K562 (cell line): ENCODE measurements at regions of chr7 and their contacts with region 1.

Region 1: GRCh38 chr7:47435889-47436312 is 146.0 kb downstream of the TNS3 start:
- DNase-seq: peak; percentile 31 to 66 (median 41)
- ATAC-seq: peak; percentile 97
- H3K4me3 ChIP-seq: no peak overlapping the region
- H3K27ac ChIP-seq: no peak overlapping the region
- H3K4me1 ChIP-seq: no peaks in the 10 kb centered on the region
- H3K27me3 ChIP-seq: peaks cover 3 to 11% of the 10 kb centered on the region in 2 experiments; a peak in 2 of 5 replicates
- CTCF ChIP-seq: peak; percentile 51 to 70 (median 67)
- EP300 ChIP-seq: peak; percentile 88
- POLR2A ChIP-seq: no peak
- RAD21 ChIP-seq: peak; percentile 71 to 73

Region 2: GRCh38 chr7:46932676-46933424 is 503.1 kb before region 1 on chr7:
- CTCF ChIA-PET with region 1: no interaction called
- POLR2A ChIA-PET with region 1: no interaction called
- in situ Hi-C with region 1: no loop called
- intact Hi-C with region 1: no loop called
- DNase-seq: no peak
- ATAC-seq: no peak
- H3K4me3 ChIP-seq: no peak overlapping the region
- H3K27ac ChIP-seq: no peak overlapping the region
- H3K4me1 ChIP-seq: no peaks in the 10 kb centered on the region
- H3K27me3 ChIP-seq: no peaks in the 10 kb centered on the region
- CTCF ChIP-seq: no peak
- EP300 ChIP-seq: no peak
- POLR2A ChIP-seq: no peak
- RAD21 ChIP-seq: peak in 1 of 2 experiments; percentile 39; a peak in 1 of 4 replicates

Region 3: GRCh38 chr7:46948716-46949115 is 487.2 kb before region 1 on chr7:
- CTCF ChIA-PET with region 1: no interaction called
- POLR2A ChIA-PET with region 1: no interaction called
- in situ Hi-C with region 1: no loop called
- intact Hi-C with region 1: no loop called
- DNase-seq: no peak
- ATAC-seq: no peak
- H3K4me3 ChIP-seq: no peak overlapping the region
- H3K27ac ChIP-seq: no peak overlapping the region
- H3K4me1 ChIP-seq: no peaks in the 10 kb centered on the region
- H3K27me3 ChIP-seq: no peaks in the 10 kb centered on the region
- CTCF ChIP-seq: no peak
- EP300 ChIP-seq: no peak
- POLR2A ChIP-seq: no peak
- RAD21 ChIP-seq: no peak

Region 4: GRCh38 chr7:47351233-47352154 is 84.4 kb before region 1 on chr7:
- CTCF ChIA-PET with region 1: no interaction called
- POLR2A ChIA-PET with region 1: no interaction called
- in situ Hi-C with region 1: no loop called
- intact Hi-C with region 1: loop called (anchors 5 kb)
- DNase-seq: no peak
- ATAC-seq: peak; percentile 33; the same call in 2 of the 3 replicates
- H3K4me3 ChIP-seq: no peak overlapping the region
- H3K27ac ChIP-seq: no peak overlapping the region
- H3K4me1 ChIP-seq: peaks cover 10 to 14% of the 10 kb centered on the region in 2 experiments; a peak in 4 of 5 replicates
- H3K27me3 ChIP-seq: peaks cover 0 to 52% of the 10 kb centered on the region in 2 experiments; a peak in 2 of 5 replicates
- CTCF ChIP-seq: peak; percentile 8 to 26 (median 17); a peak in 1 of 6 replicates
- EP300 ChIP-seq: no peak
- POLR2A ChIP-seq: no peak
- RAD21 ChIP-seq: peak in 1 of 2 experiments; percentile 36; a peak in 2 of 4 replicates

Region 5: DNA sequence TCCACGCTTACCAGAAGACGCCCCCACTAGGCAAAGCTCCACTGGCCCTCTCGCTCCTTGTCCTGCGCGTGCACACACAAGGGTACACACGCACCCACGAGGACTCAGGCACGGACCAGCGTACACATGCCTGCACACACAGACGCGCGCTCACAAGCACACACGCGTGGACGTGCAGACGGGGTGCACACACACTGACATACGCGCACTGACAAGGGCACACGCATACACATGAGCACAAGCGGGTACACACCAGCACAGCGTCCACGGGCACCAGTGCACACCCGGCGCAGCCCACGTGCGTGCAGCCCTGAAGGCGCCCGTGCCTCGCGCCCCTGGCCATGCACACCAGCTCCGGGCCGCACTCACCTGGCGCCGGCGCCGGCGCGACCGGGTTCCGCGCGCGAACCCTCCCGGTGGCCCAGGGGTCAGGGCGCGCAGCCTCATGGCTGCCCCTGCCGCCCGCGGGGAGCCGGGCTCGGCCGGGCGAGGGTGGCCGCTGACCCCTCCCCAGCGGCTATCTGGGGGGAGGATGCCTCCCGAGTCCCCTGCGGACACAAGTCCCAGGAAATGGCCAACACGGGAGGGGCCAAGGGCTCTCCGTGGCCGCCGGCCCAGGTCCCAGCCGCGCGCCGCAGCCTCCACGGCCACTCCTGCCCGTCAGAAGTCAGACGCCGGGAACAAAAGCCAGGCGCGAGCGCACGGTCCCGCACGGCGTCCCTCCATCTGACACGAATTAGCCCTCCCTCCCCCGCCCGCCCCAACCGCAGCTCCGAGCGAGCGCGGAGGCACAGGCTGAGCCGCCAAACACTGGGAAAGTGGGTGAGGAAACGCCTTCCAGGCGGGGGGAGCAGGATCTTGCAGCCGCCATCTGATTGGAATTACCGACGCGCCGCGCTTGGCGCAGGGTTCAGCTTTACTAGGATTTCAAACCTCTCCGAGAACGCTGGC is 101.0 kb after region 1 on chr7:
- CTCF ChIA-PET with region 1: no interaction called
- POLR2A ChIA-PET with region 1: no interaction called
- in situ Hi-C with region 1: no loop called
- intact Hi-C with region 1: no loop called
- DNase-seq: no peak
- ATAC-seq: no peak
- H3K4me3 ChIP-seq: no peak overlapping the region
- H3K27ac ChIP-seq: no peak overlapping the region
- H3K4me1 ChIP-seq: no peaks in the 10 kb centered on the region; a peak in 1 of 5 replicates
- H3K27me3 ChIP-seq: peaks cover 8 to 65% of the 10 kb centered on the region in 2 experiments; a peak in 4 of 5 replicates
- CTCF ChIP-seq: no peak
- EP300 ChIP-seq: no peak
- POLR2A ChIP-seq: no peak
- RAD21 ChIP-seq: no peak

Region 6: DNA sequence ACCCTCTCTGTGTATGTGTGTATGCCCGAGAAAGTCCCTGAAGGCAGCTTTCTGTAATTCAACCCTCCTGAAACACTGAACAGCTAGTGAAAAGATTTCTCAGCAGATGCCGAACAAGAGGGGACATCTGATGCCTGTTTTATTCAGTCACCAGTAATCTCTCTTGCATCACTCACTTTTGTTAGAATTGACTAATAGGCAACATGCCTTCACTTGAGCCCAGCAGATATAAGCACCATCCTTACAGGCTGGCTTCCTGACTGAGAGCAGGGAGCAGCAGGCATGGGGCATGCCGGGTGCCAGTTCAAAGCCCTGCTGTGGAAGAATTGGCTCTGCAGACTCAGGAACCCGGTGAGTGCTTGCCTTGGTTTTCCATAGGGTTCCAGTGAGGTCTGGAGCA is 735.3 kb after region 1 on chr7 and contains the start of gene ABCA13:
- CTCF ChIA-PET with region 1: no interaction called
- POLR2A ChIA-PET with region 1: no interaction called
- in situ Hi-C with region 1: no loop called
- intact Hi-C with region 1: no loop called
- DNase-seq: no peak
- ATAC-seq: no peak
- H3K4me3 ChIP-seq: no peak within 1 kb of the TSS
- H3K27ac ChIP-seq: no peak within 1 kb of the TSS
- H3K4me1 ChIP-seq: no peaks in the 10 kb centered on the region
- H3K27me3 ChIP-seq: no peaks in the 10 kb centered on the region
- CTCF ChIP-seq: no peak
- EP300 ChIP-seq: no peak
- POLR2A ChIP-seq: no peak
- RAD21 ChIP-seq: no peak
- polyA plus RNA-seq, gene ABCA13: 0.31 to 0.38 TPM